ENCODE measurements at regions of chr4 and their contacts with region 1.

Region 1: GRCh38 chr4:173420324-173420752 is 21.4 kb upstream of the SCRG1 start:
- DNase-seq: no peak
- ATAC-seq: peak in 2 of 4 donors; percentile 44 to 56
- H3K4me3 ChIP-seq: peak overlapping the region in 3 of 12 donors; percentile 10 to 25 (median 22)
- H3K27ac ChIP-seq: no peak overlapping the region
- H3K4me1 ChIP-seq: peaks cover 0 to 8% (median 2%) of the 10 kb centered on the region in 12 donors
- H3K27me3 ChIP-seq: no peaks in the 10 kb centered on the region
- CTCF ChIP-seq: peak; percentile 25 to 68 (median 54)
- POLR2A ChIP-seq: no peak

Region 2: DNA sequence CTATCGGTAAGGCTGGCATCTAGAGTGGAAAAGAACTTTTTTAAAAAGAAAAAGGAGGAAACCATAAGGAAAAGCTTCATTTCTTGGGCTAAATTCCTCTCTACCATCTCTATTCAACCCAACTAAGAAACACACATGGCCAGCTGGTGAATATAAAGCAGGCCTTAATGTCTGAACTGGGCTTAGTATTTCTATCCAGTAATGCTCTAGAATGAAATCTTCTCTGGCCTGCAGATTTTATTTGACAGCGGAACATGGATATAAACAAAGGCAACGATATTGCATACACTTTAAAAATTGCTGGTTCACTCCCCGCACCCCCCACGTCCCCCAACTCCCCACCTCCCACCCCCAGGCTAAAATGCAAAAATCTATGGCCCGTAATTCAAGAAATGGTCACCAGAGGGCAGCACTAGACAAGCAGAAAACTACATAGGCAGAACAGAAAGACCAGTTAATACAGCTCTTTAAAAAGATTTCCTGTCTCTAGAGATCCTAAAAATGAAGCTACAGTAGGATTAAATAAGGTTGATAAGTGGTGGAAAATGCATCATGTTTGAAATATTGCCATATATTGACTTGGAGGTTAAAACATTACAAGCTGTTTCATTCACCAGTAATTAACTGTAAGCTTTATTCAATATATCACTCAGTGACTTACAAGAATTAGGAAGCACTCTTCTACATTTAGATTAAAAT is 407.0 kb before region 1 on chr4:
- intact Hi-C with region 1: loop called in 3 of 10 experiments (anchors 5 to 10 kb)
- DNase-seq: peak in 1 of 5 donors; percentile 23
- ATAC-seq: peak in 3 of 4 donors; percentile 46 to 71 (median 64)
- H3K4me3 ChIP-seq: no peak overlapping the region
- H3K27ac ChIP-seq: no peak overlapping the region
- H3K4me1 ChIP-seq: peaks cover 0 to 5% (median 0%) of the 10 kb centered on the region in 12 donors
- H3K27me3 ChIP-seq: no peaks in the 10 kb centered on the region
- CTCF ChIP-seq: peak; percentile 56 to 92 (median 70)
- POLR2A ChIP-seq: no peak

Region 3: DNA sequence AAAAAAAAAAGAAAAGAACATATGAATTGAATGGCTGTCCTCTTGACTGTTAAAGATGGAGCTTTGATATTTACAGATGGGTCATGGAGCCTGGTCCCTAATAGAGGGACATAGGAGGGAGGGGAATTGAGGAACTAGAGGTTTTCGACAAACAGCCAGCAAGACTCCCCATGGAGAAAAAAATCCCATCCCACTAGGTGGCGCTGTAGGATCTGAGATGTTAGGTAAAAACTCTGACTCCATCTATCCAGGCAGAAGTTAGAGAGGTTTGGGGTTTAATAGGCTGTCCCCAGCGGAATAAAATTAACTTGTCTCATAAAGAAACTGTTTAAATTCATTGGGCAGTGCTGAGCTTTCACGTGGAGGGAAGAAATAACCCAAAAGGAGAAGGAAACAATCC is 132.0 kb before region 1 on chr4:
- intact Hi-C with region 1: loop called in 2 of 10 experiments (anchors 1 to 10 kb)
- DNase-seq: peak in 4 of 5 donors; percentile 62 to 70 (median 67)
- ATAC-seq: peak; percentile 32 to 73 (median 56)
- H3K4me3 ChIP-seq: peak overlapping the region in 1 of 12 donors; percentile 51
- H3K27ac ChIP-seq: no peak overlapping the region
- H3K4me1 ChIP-seq: peaks cover 0 to 7% (median 0%) of the 10 kb centered on the region in 12 donors
- H3K27me3 ChIP-seq: no peaks in the 10 kb centered on the region
- CTCF ChIP-seq: peak; percentile 50 to 71 (median 61)
- POLR2A ChIP-seq: no peak

Region 4: DNA sequence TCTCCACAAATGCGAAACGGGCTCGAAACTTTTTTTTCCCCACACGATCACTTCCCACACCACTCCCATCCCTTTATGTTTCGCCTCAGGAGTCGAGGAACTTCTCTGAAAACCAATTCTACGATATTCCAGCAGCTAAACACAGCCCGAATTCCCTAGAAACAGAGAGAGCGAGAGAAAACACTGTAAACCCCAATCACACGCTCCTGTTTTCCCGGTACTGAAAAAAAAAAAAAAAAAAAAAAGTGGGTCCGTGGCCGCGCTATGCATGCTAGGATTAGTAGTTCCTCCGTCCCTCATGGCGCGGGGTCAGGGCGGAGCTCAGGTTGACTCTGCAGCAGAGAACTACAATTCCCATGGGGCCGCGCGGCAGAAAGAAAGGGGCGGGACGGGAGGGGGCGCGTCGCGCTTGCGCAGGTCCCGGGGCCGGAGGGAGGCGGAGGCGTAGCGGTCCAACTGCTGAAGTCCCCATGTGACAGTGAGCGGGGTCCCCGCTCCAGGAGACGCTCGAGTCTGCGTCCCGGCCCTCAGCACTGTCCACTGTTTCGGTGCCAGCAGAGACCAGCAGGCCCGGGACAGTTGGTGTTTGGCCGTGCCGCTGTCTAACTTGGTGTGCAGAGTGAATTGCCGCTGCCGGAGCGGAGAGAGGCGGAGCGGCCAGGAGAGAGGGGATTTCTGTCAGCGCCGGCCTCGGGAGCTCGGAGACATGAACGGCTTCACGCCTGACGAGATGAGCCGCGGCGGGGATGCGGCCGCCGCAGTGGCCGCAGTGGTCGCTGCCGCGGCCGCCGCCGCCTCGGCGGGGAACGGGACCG is 49.7 kb before region 1 on chr4 and contains the start of gene SAP30:
- intact Hi-C with region 1: loop called in 3 of 10 experiments (anchors 5 kb)
- DNase-seq: peak; percentile 99
- ATAC-seq: peak; percentile 96 to 97 (median 96)
- H3K4me3 ChIP-seq: peak within 1 kb of the TSS; percentile 66 to 92 (median 85)
- H3K27ac ChIP-seq: peak within 1 kb of the TSS; percentile 91 to 99 (median 96)
- H3K4me1 ChIP-seq: peaks cover 0 to 65% (median 26%) of the 10 kb centered on the region in 12 donors
- H3K27me3 ChIP-seq: no peaks in the 10 kb centered on the region
- CTCF ChIP-seq: no peak
- POLR2A ChIP-seq: peak; percentile 86 to 98
- total RNA-seq, gene SAP30: 10.8 to 29.1 (median 16.0) TPM

Region 5: GRCh38 chr4:173386751-173387150 is 33.6 kb before region 1 on chr4:
- intact Hi-C with region 1: no loop called
- DNase-seq: no peak
- ATAC-seq: no peak
- H3K4me3 ChIP-seq: no peak overlapping the region
- H3K27ac ChIP-seq: no peak overlapping the region
- H3K4me1 ChIP-seq: peaks cover 0 to 9% (median 0%) of the 10 kb centered on the region in 12 donors
- H3K27me3 ChIP-seq: no peaks in the 10 kb centered on the region
- CTCF ChIP-seq: no peak
- POLR2A ChIP-seq: no peak

Region 6: DNA sequence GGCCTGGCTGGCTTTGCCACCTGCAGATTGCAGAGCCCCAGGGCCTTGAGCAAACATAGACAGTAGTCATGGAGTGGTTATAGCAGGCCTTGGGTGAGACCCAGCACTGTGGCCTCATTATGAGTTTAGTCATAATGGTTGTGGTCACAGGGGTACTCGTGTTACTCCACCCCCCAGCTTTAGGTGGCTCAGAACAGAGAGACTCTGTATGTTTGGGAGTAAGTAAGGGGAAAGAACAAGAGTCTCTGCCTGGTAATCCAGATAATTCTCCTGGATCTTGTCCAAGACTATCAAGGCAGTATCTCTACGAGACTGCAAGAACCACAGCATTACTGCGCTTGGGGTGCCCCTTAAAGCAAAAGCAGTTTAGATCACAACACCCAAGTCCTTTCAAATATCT is 40.8 kb after region 1 on chr4:
- intact Hi-C with region 1: no loop called
- DNase-seq: no peak
- ATAC-seq: no peak
- H3K4me3 ChIP-seq: no peak overlapping the region
- H3K27ac ChIP-seq: no peak overlapping the region
- H3K4me1 ChIP-seq: peaks cover 0 to 7% (median 0%) of the 10 kb centered on the region in 12 donors
- H3K27me3 ChIP-seq: no peaks in the 10 kb centered on the region
- CTCF ChIP-seq: no peak
- POLR2A ChIP-seq: no peak

Region 7: DNA sequence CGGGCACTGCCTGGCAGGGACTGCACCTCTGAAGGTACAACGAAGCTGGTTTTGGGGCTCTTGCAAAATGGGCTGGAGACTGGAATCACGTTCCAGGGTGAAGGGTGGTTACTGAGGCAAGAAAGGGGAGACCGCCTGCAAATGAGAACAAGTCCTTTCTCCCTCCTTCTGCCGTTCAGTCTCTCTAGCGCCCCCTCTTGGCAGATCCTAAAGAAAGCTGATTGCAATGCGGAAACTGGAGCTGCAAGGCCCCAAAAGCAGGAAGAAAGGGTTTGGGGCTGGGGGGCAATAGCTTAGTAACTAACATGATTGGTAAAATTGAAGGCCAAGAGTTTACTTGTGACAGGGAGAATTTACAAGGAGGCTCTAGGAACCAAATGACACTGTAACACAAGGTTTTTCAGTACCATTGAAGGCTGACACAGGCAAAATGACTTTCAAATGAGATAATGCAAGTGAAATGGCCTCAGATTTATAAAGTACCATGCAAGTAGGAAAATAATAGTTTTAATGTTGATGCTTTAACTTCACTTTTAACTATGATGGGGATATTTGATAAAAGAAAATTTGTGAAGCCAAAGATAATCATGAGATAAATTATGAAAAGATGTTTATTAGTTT is 332.4 kb after region 1 on chr4:
- intact Hi-C with region 1: loop called in 2 of 10 experiments (anchors 10 kb)
- DNase-seq: no peak
- ATAC-seq: no peak
- H3K4me3 ChIP-seq: no peak overlapping the region
- H3K27ac ChIP-seq: no peak overlapping the region
- H3K4me1 ChIP-seq: peaks cover 0 to 6% (median 0%) of the 10 kb centered on the region in 12 donors
- H3K27me3 ChIP-seq: no peaks in the 10 kb centered on the region
- CTCF ChIP-seq: peak in 10 of 12 donors; percentile 11 to 50 (median 42)
- POLR2A ChIP-seq: no peak